ENCODE measurements at regions of chr9 and their contacts with region 1.

Region 1: GRCh38 chr9:137046098-137046787 is at the start of gene NPDC1:
- DNase-seq: no peak
- ATAC-seq: peak; percentile 90
- H3K4me3 ChIP-seq: no peak within 1 kb of the TSS
- H3K27ac ChIP-seq: no peak within 1 kb of the TSS
- H3K4me1 ChIP-seq: no peaks in the 10 kb centered on the region
- H3K27me3 ChIP-seq: peaks cover 12 to 18% of the 10 kb centered on the region in 2 experiments; a peak in 3 of 4 replicates
- CTCF ChIP-seq: peak; percentile 82 to 95 (median 93)
- EP300 ChIP-seq: no peak
- POLR2A ChIP-seq: no peak
- RAD21 ChIP-seq: peak; percentile 63
- polyA plus RNA-seq, gene NPDC1: not detected

Region 2: DNA sequence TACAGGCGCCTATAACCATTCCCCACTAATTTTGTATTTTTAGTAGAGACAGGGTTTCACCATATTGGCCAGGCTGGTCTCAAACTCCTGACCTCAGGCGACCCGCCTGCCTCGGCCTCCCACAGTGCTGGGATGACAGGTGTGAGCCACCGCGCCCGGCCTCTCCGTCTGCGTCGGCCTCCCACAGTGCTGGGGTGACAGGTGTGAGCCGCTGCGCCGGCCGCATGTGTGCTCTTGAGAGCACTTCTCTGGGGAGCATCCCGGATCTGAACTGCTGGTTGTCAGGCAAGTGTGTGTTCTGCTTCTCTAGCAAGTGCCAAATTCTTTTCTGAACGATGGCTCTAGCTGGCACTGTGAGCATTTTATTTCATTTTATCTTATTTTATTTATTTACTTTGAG is 11.3 kb after region 1 on chr9:
- CTCF ChIA-PET with region 1: interaction called, 81 read pairs
- POLR2A ChIA-PET with region 1: no interaction called
- RAD21 ChIA-PET with region 1: interaction called, 18 read pairs
- SMC1A ChIA-PET with region 1: no interaction called
- in situ Hi-C with region 1: no loop called
- intact Hi-C with region 1: no loop called
- DNase-seq: no peak
- ATAC-seq: no peak
- H3K4me3 ChIP-seq: no peak overlapping the region
- H3K27ac ChIP-seq: no peak overlapping the region
- H3K4me1 ChIP-seq: no peaks in the 10 kb centered on the region
- H3K27me3 ChIP-seq: peaks cover 4 to 12% of the 10 kb centered on the region in 2 experiments; a peak in 3 of 4 replicates
- CTCF ChIP-seq: no peak
- EP300 ChIP-seq: no peak
- POLR2A ChIP-seq: no peak
- RAD21 ChIP-seq: no peak

Region 3: DNA sequence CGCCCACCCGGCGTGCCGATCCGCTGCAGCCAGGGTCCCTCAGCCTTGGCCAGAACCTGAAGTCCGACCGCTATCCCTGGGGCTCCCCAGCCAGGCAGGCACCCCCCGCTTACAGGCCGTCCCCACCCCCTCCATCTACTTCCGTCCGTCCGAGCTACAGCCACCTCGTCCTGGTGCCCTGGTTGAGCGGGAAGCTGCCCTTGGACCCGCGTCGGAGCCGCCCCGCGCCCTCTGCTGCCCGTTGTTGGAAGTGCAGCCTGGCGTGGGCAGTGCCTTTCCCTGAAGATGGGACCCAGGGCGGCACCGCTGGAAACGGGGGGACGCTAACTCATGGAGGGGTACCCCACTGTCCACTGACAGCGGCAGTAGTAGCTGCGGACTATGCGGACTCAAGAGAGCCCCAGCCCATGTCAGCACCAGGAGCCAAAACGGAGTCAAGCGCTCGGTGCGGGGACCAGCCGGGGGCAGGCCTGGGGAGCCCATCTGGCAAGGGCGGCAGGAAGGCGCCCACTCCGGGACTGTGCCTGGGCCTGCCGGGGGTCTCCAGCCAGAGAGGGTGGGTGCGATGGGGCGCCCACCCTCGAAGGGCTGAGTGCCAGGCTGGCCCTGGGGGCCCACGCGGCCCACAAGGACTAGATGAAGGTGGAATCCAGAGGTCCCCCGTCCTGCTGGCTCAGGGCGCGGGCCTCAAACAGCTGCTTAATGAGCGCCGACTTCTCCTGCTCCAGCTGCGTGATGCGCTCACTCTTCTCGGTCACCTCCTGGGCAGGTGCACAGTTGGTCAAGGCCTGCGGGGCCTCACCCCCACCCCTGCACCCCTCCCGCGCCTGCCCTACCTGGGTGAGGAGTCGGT is 18.0 kb after region 1 on chr9:
- CTCF ChIA-PET with region 1: interaction called, 81 read pairs
- POLR2A ChIA-PET with region 1: no interaction called
- RAD21 ChIA-PET with region 1: interaction called, 25 read pairs
- SMC1A ChIA-PET with region 1: interaction called, 9 read pairs
- in situ Hi-C with region 1: no loop called
- intact Hi-C with region 1: loop called (anchors 1 kb)
- DNase-seq: no peak
- ATAC-seq: peak; percentile 49
- H3K4me3 ChIP-seq: no peak overlapping the region
- H3K27ac ChIP-seq: no peak overlapping the region
- H3K4me1 ChIP-seq: peaks cover 15% of the 10 kb centered on the region
- H3K27me3 ChIP-seq: no peaks in the 10 kb centered on the region
- CTCF ChIP-seq: peak; percentile 78 to 96 (median 85)
- EP300 ChIP-seq: no peak
- POLR2A ChIP-seq: no peak
- RAD21 ChIP-seq: peak; percentile 61

Measured in GM12878 (cell line).